ENCODE measurements at regions of chr5 and their contacts with region 1.

Region 1: DNA sequence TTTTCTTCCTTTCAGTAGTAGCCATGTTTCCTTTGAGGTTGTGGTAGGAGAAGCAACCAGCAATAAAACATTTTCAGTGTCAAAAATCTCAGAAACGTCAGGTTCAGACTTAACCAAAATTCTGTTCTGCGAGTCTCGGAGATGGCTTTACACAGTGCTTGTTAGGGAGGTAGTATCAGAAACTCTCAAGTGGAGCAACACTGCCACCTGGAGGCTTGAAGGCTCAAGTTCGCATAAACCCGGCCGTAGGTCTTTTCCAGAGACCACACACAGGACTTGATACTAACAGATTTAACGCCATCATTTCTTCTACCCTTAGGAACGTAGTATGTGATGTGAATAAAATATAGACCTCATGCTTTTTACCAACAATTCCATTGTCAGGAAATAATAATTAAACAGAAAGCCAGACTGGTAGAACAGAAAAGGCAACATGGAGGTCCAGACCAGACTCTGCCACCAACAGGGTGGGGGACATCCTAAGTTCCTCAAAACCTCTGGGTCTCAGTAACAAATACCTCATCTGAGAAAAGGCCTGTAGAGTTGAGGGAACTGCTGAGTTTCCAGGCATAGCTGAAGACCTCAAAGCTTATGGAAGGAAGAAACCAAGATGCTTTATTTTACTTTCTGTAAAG is 8.5 kb downstream of the PTGER4 start:
- DNase-seq: peak; percentile 61 to 96 (median 84)

Region 2: DNA sequence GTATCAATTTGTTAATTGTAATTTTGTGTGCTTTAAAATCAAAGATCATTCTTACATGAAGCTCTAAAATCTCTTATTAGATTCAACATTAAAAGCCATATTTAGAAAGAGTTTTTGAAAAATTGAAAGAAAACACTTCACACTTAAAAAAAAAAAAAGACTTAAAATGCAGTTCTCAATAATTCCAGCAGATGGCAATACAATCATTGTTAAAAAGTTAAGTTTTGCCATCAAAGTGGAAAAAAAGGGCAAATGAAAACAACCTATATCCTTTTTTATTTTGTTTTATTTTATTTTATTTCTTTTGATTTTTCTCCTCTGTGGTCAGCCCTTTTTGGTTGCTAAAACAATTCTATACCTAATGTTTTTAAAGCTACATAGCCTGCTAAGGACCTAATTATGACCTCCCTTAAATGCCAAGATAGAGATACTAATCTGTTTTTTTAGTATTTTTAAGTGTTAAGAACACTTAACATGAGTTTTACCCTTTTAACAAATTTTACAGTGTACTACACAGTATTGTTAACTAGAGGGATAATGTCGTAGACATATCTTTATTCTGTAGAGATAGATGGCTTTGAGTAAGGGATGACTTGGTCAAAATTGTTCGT is 1109.3 kb before region 1 on chr5:
- intact Hi-C with region 1: loop called (anchors 2 kb)
- DNase-seq: no peak

Region 3: DNA sequence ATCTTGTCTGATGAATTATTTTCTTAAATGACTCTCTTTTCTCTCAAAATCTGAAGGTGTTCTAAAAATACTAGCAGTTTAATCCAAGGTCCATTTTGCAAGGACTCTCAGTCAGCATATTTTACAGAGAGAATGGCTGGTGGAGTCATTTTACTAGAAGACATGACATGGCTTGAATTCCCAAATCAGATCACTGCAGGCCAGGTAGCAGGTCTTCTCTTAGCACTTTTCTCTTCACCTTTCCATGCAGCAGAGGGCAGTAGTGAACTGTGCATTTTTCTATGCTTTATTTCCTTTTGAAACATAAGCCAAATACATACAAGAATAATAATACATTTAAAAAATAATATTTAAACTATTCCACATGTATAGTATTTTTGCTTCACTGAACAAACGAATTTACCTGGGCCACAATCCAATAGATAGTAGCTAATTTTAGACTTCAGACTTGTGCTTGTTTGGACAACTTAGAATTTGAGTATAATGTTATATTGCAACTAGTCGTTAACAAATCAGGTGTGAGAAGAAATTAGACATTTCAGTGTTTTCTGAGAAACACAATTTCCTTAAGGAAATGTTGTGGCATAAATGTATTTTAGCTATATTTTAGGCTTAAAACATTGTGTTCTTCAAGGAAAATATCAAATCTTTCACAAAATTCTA is 974.1 kb before region 1 on chr5:
- intact Hi-C with region 1: loop called (anchors 2 kb)
- DNase-seq: peak in 2 of 10 donors; percentile 16

Region 4: DNA sequence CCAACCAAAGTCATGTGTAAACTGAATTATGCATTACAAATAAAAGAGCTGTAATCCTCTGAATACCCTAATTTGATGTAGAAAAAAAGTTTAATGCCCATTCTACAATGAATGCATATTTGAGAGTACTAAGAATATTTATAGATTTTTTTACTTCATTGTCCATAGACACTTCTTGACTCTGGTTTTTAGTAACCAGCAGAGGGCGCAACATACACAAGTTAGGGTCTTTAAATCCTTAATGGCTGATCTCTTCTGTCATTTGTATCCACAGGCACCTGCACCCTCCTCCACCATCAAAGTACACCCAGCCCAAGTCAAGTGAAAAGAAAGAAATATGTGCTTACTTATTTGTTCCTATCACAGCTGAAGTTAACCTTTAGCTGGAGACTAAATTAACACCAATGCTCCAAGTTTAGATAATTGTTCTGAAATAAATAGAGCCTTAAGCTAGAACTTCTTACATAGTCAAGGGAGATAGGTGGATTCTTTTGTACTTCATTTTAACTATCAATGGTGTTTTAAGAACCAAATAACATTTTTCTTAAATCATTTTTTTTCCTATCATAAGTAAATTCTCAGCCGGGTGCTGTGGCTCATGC is 739.3 kb before region 1 on chr5:
- intact Hi-C with region 1: loop called (anchors 1 kb)
- DNase-seq: peak in 3 of 10 donors; percentile 8 to 34 (median 16)